ENCODE measurements at regions of chr16 and their contacts with region 1.

Region 1: GRCh38 chr16:68085259-68086071 is at the start of gene NFATC3:
- DNase-seq: peak; percentile 96 to 99 (median 98)
- ATAC-seq: peak; percentile 92
- H3K4me3 ChIP-seq: peak within 1 kb of the TSS; percentile 88
- H3K4me3 Mint-ChIP-seq: peak within 1 kb of the TSS; percentile 82 to 97 (median 92)
- H3K27ac ChIP-seq: peak within 1 kb of the TSS; percentile 85
- H3K27ac Mint-ChIP-seq: peak within 1 kb of the TSS; percentile 71 to 97 (median 92)
- H3K4me1 ChIP-seq: peaks cover 63 to 66% of the 10 kb centered on the region in 2 donors
- H3K4me1 Mint-ChIP-seq: peaks cover 56 to 79% (median 70%) of the 10 kb centered on the region in 7 donors
- H3K27me3 ChIP-seq: no peaks in the 10 kb centered on the region
- H3K27me3 Mint-ChIP-seq: no peaks in the 10 kb centered on the region
- total RNA-seq, gene NFATC3: 120 to 151 (median 147) TPM

Region 2: GRCh38 chr16:67561824-67562525 is 523.5 kb before region 1 on chr16:
- CTCF ChIA-PET with region 1: no interaction called
- POLR2A ChIA-PET with region 1: interaction called, 3 read pairs
- intact Hi-C with region 1: loop called (anchors 1 to 10 kb)
- DNase-seq: peak; percentile 93 to 98 (median 96)
- ATAC-seq: peak; percentile 86
- H3K4me3 ChIP-seq: peak overlapping the region; percentile 72
- H3K4me3 Mint-ChIP-seq: peak overlapping the region; percentile 85 to 93 (median 90)
- H3K27ac ChIP-seq: peak overlapping the region; percentile 98
- H3K27ac Mint-ChIP-seq: peak overlapping the region; percentile 90 to 99 (median 96)
- H3K4me1 ChIP-seq: peaks cover 30 to 36% of the 10 kb centered on the region in 2 donors
- H3K4me1 Mint-ChIP-seq: peaks cover 28 to 64% (median 46%) of the 10 kb centered on the region in 7 donors
- H3K27me3 ChIP-seq: no peaks in the 10 kb centered on the region
- H3K27me3 Mint-ChIP-seq: no peaks in the 10 kb centered on the region

Region 3: GRCh38 chr16:67872786-67873537 is 212.5 kb before region 1 on chr16 and contains the start of gene EDC4:
- CTCF ChIA-PET with region 1: no interaction called
- POLR2A ChIA-PET with region 1: interaction called, 3 read pairs
- intact Hi-C with region 1: loop called in 1 of 2 experiments (anchors 1 kb)
- DNase-seq: peak; percentile 75 to 96 (median 83)
- ATAC-seq: peak; percentile 96
- H3K4me3 ChIP-seq: peak within 1 kb of the TSS; percentile 88
- H3K4me3 Mint-ChIP-seq: peak within 1 kb of the TSS; percentile 88 to 96 (median 94)
- H3K27ac ChIP-seq: peak within 1 kb of the TSS; percentile 91
- H3K27ac Mint-ChIP-seq: peak within 1 kb of the TSS; percentile 90 to 97 (median 92)
- H3K4me1 ChIP-seq: peaks cover 19 to 30% of the 10 kb centered on the region in 2 donors
- H3K4me1 Mint-ChIP-seq: peaks cover 25 to 41% (median 36%) of the 10 kb centered on the region in 7 donors
- H3K27me3 ChIP-seq: no peaks in the 10 kb centered on the region
- H3K27me3 Mint-ChIP-seq: no peaks in the 10 kb centered on the region
- total RNA-seq, gene EDC4: 103 to 166 (median 122) TPM

Region 4: GRCh38 chr16:68005786-68006286 is 79.6 kb before region 1 on chr16:
- CTCF ChIA-PET with region 1: interaction called, 3 read pairs
- POLR2A ChIA-PET with region 1: interaction called, 14 read pairs
- intact Hi-C with region 1: no loop called
- DNase-seq: peak in 7 of 9 donors; percentile 37 to 87 (median 77)
- ATAC-seq: peak; percentile 99
- H3K4me3 ChIP-seq: peak overlapping the region; percentile 23
- H3K4me3 Mint-ChIP-seq: peak overlapping the region; percentile 40 to 85 (median 60)
- H3K27ac ChIP-seq: peak overlapping the region; percentile 50
- H3K27ac Mint-ChIP-seq: peak overlapping the region; percentile 91 to 100 (median 97)
- H3K4me1 ChIP-seq: peaks cover 28 to 45% of the 10 kb centered on the region in 2 donors
- H3K4me1 Mint-ChIP-seq: peaks cover 18 to 68% (median 44%) of the 10 kb centered on the region in 7 donors
- H3K27me3 ChIP-seq: no peaks in the 10 kb centered on the region
- H3K27me3 Mint-ChIP-seq: peaks cover 0 to 2% (median 0%) of the 10 kb centered on the region in 5 donors

Region 5: DNA sequence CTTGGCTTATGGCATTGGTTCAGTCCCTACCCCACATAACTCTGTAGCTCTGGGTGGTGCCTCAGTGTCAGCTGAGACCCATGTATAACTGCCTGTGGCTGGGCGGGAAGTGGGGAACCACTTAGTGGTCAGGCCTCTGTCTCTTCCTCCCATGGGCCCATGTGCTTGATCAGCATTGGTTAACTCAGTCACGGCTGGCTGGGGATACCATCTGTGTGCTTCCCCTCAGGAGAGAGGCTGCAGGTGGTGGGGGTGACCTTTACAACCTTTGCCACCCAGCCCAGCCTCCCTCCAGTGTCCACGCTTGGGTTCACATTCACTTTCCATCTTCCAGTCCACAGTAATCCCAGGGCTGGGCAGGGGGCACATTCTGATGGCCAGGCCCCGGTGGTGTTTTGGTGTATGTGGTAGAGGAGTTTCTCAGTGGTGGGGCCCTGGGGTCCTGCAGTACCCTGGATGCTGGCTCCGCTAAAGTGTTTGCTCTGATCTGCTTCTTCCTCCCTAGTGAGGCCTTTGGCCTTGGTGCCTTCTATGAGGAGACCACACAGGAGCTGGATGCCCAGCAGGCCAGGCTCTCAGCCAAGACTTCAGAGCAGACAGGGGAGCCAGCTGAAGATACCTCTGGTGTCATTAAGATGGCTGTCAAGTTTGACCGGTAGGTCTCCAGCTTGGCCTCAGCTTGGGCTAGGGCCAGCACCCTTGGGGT is 10.5 kb before region 1 on chr16:
- CTCF ChIA-PET with region 1: interaction called, 57 read pairs
- POLR2A ChIA-PET with region 1: interaction called, 300 read pairs
- intact Hi-C with region 1: loop called (anchors 1 to 2 kb)
- DNase-seq: peak in 2 of 9 donors; percentile 27 to 67
- ATAC-seq: peak; percentile 77
- H3K4me3 ChIP-seq: peak overlapping the region; percentile 9
- H3K4me3 Mint-ChIP-seq: peak overlapping the region; percentile 32 to 79 (median 53)
- H3K27ac ChIP-seq: no peak overlapping the region
- H3K27ac Mint-ChIP-seq: peak overlapping the region; percentile 14 to 90 (median 76)
- H3K4me1 ChIP-seq: peaks cover 75 to 88% of the 10 kb centered on the region in 2 donors
- H3K4me1 Mint-ChIP-seq: peaks cover 69 to 89% (median 86%) of the 10 kb centered on the region in 7 donors
- H3K27me3 ChIP-seq: no peaks in the 10 kb centered on the region
- H3K27me3 Mint-ChIP-seq: no peaks in the 10 kb centered on the region

Region 6: DNA sequence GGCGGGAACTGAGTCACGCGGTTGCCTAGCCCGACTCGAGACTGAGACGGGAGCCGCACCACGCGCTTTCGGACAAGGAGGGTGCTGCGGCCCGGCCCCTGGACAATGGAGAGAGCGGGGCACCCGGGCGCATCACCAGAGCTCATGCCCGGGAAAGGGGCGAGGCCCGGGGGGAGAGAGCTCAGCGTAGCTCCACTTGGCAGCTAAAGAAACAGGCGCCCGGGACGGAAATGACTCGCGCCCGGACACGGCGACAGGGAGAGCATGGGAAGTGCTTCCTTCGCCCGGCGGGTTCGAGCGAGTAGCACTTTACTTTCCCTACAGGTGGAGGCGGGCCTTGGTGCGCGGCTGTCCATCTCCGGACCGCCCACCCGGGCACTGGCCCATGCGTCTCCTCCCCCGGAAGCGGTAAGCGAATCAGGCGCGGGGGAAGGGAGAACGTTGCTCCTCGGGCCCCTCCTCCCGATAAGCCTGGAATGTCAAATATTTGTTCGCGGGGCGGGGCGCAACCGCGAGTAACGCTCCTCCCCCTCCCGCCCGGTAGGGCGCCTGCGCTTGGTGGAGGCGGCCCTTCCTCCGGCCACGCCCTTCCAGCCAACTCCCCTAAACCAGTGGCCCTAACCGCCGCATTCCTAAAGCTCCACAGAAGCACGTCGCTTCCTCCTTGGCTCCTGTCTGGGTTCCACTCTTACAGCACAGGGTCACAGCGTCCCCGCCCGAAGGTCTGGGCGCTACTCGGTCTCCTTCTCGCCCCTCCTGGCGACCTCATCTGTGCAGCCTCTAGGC is 152.0 kb after region 1 on chr16:
- CTCF ChIA-PET with region 1: interaction called, 3 read pairs
- POLR2A ChIA-PET with region 1: interaction called, 9 read pairs
- intact Hi-C with region 1: loop called in 1 of 2 experiments (anchors 2 kb)
- DNase-seq: peak; percentile 71 to 90 (median 83)
- ATAC-seq: peak; percentile 88
- H3K4me3 ChIP-seq: peak overlapping the region; percentile 91
- H3K4me3 Mint-ChIP-seq: peak overlapping the region; percentile 90 to 99 (median 96)
- H3K27ac ChIP-seq: peak overlapping the region; percentile 67
- H3K27ac Mint-ChIP-seq: peak overlapping the region; percentile 72 to 95 (median 87)
- H3K4me1 ChIP-seq: peaks cover 6 to 10% of the 10 kb centered on the region in 2 donors
- H3K4me1 Mint-ChIP-seq: peaks cover 23 to 45% (median 34%) of the 10 kb centered on the region in 7 donors
- H3K27me3 ChIP-seq: no peaks in the 10 kb centered on the region
- H3K27me3 Mint-ChIP-seq: peaks cover 0 to 13% (median 0%) of the 10 kb centered on the region in 5 donors

Region 7: DNA sequence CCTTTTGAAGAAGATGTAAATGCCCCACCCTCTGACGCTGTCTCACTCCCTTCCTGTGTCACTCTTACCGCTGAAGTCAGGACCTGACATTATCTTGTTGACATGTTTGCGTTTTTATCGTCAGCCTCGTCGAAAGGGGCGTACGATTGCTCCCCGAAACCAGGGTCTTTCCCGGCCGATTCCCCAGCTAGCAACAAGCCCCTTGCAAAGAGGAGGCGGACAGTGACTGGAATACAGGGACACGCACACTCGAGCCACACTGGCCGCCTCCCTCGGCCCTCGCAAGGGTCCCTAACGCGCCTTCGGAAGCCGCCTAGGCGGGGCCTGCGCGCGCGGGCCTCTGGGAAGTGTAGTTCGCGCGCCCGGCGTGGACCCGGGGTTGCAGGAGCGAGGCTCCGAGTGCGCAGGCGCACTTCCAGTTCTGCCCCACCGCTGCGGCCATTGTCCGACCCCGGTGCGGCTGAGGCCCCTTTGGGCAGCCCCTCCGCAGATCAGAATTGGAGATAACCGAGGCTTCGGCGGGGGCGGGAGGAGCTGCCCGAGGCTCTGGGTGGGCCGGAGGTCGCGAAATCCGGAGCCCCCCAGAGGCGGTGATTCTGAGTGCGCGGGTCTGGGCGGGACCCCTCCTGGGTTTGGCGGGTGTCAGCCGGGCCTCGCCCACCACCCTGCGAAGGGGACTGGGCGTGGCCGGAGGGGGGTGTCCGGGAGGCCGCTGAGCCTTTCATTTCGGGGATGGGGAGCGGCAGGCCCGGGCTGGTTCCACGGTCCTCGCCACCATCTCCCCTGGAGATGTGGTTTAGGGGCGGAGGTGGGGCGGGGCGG is 453.6 kb after region 1 on chr16 and contains the start of gene ZFP90:
- CTCF ChIA-PET with region 1: no interaction called
- POLR2A ChIA-PET with region 1: no interaction called
- intact Hi-C with region 1: loop called in 1 of 2 experiments (anchors 10 kb)
- DNase-seq: peak; percentile 82 to 91 (median 88)
- ATAC-seq: peak; percentile 94
- H3K4me3 ChIP-seq: peak within 1 kb of the TSS; percentile 66
- H3K4me3 Mint-ChIP-seq: peak within 1 kb of the TSS; percentile 86 to 99 (median 97)
- H3K27ac ChIP-seq: peak within 1 kb of the TSS; percentile 94
- H3K27ac Mint-ChIP-seq: peak within 1 kb of the TSS; percentile 97 to 100 (median 100)
- H3K4me1 ChIP-seq: peaks cover 13 to 14% of the 10 kb centered on the region in 2 donors
- H3K4me1 Mint-ChIP-seq: peaks cover 13 to 32% (median 24%) of the 10 kb centered on the region in 7 donors
- H3K27me3 ChIP-seq: no peaks in the 10 kb centered on the region
- H3K27me3 Mint-ChIP-seq: no peaks in the 10 kb centered on the region
- total RNA-seq, gene ZFP90: 25.7 to 49.4 (median 38.8) TPM